ENCODE measurements at regions of chr9 and their contacts with region 1.

Region 1: DNA sequence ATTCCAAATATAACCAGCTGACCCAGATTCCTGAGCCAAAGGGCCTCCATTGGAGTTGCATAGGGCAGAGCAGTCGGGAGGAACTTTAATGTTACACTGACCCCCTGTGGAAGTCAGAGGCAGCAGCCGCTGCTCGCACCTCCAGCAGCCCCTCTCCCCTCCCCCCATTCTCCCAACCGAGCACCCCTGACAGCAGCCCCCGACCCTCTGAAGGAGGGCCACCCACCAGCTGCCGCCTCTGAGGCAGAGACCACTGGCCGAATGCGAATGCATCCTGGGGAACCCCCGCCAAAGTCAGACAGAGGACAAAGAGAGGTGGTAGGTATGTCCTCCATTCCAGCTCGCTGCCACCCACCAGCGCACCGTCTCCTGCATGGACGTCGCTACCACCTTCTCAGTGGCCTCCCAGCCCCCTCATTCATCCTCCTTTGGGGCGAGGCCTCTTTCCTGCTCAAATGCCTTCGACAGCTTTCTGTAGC is 231.0 kb downstream of the CDK5RAP2 start:
- DNase-seq: no peak
- ATAC-seq: no peak

Region 2: DNA sequence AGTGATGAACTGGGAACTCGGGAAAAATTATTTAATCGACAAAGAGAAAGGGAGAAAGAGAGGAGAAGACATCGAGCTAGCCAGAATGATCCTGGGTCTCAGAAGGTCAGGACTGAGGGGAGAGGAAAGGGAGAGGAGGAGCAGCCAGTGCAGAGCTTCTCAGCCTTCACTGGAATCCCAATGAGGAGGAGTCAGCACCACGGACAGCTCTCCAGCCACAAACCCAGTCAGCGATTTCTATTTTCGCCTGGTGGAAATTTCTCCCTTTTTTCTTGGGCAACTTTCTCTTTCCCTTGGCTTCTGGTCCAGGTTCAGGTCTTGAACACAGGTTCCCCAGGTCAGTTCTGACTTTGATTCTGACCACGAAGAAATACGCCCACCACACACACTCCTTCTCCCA is 978.2 kb before region 1 on chr9:
- intact Hi-C with region 1: loop called (anchors 10 kb)
- DNase-seq: no peak
- ATAC-seq: no peak

Measured in Right ventricle myocardium inferior (tissue), 1 donor.